A549 (cell line): ENCODE measurements at regions of chr5 and their contacts with region 1.

Region 1: GRCh38 chr5:69265931-69266330 is 31.2 kb downstream of the CDK7 start:
- DNase-seq: peak in 1 of 2 experiments; percentile 43
- ATAC-seq: peak; percentile 74 to 92
- H3K4me3 ChIP-seq: no peak overlapping the region
- H3K27ac ChIP-seq: no peak overlapping the region
- H3K4me1 ChIP-seq: peaks cover 10% of the 10 kb centered on the region
- CTCF ChIP-seq: no peak
- EP300 ChIP-seq: no peak
- POLR2A ChIP-seq: no peak
- RAD21 ChIP-seq: 0 out of 5 replicates have a peak, but pooled peaks of 1 of the 2 experiments have one; percentile 14

Region 2: GRCh38 chr5:69250598-69250997 is 15.3 kb before region 1 on chr5:
- CTCF ChIA-PET with region 1: interaction called, 13 read pairs
- POLR2A ChIA-PET with region 1: no interaction called
- DNase-seq: no peak
- ATAC-seq: peak in 1 of 2 experiments; percentile 27; a peak in 2 of 6 replicates
- H3K4me3 ChIP-seq: no peak overlapping the region
- H3K27ac ChIP-seq: peak overlapping the region; percentile 51 to 82; a peak in 4 of 6 replicates
- H3K4me1 ChIP-seq: peaks cover 16% of the 10 kb centered on the region; the same call in 2 of the 3 replicates
- CTCF ChIP-seq: no peak
- EP300 ChIP-seq: no peak
- POLR2A ChIP-seq: no peak
- RAD21 ChIP-seq: no peak

Region 3: DNA sequence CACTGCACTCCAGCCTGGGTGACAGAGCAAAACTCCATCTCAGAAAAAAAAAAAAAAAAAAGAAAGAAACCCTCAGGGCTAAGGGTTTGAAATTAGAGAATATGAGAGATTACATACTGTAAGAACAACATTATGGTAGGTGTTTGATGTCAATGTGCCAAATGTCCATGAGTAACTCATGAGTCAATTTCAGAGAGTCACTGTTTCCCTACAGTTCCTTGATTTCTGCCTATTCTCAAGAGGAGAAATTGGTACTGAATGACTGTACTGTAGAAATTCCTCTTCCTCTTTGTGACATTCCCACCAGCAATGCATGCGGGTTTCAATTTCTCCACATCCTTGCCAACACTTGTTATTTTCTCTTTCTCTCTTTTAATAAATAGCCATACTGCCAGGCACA is 184.2 kb after region 1 on chr5:
- CTCF ChIA-PET with region 1: no interaction called
- POLR2A ChIA-PET with region 1: no interaction called
- DNase-seq: peak; percentile 27 to 42
- ATAC-seq: peak; percentile 42 to 59; a peak in 3 of 6 replicates
- H3K4me3 ChIP-seq: no peak overlapping the region
- H3K27ac ChIP-seq: no peak overlapping the region
- H3K4me1 ChIP-seq: peaks cover 33% of the 10 kb centered on the region
- CTCF ChIP-seq: no peak
- EP300 ChIP-seq: no peak
- POLR2A ChIP-seq: no peak
- RAD21 ChIP-seq: no peak